Mammary epithelial cell (primary cell): ENCODE measurements at regions of chr16 and their contacts with region 1.

Region 1: GRCh38 chr16:24729362-24729984 is at the start of gene TNRC6A:
- DNase-seq: peak; percentile 83
- H3K4me3 ChIP-seq: peak within 1 kb of the TSS; percentile 85 to 96 (median 89)
- H3K27ac ChIP-seq: peak within 1 kb of the TSS; percentile 81
- H3K4me1 ChIP-seq: peaks cover 17% of the 10 kb centered on the region
- H3K27me3 ChIP-seq: no peaks in the 10 kb centered on the region
- CTCF ChIP-seq: no peak
- total RNA-seq, gene TNRC6A: 21.3 to 36.9 TPM

Region 2: DNA sequence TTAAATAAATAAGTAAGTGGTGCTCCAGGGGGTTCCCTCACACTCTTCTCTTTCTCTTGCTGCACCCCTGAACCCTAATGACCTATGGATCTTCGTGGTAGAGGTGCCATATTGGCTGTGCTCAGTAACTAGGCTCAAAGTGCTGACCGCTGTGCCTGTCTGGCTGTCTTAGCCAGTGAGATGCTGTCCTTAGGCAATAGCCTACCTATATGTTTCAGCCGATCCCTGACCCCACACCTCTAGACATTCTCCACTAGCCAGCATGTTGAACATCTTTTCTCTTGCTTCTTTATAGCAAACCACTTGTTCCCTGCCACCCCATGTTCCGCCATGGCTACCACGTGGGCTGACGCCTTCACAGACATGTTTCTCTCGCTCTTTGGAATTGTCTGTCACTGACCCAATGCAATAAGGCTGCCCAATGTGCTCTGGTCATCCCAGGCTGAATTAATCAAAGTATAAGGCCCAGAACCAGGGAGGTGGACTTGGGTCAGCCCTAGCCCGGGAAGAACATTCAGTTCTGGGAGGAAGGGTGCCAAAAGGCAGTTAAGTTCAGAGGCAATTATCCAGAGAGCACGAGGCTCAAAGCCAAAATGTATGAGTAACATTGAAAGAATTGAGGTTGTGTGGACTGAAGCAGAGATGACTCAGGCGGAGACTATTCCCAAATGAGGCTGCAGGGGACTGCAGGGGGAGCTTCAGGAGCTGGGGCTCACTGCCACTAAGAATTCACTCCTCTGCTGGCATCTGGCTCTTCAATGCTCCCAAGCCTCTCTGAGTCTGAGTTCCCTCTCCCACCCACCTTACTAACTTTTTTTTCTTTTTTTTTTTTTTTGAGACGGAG is 28.7 kb before region 1 on chr16:
- CTCF ChIA-PET with region 1: no interaction called
- dilution Hi-C with region 1: no loop called
- in situ Hi-C with region 1: no loop called
- intact Hi-C with region 1: loop called (anchors 1 kb)
- DNase-seq: peak; percentile 85
- H3K4me3 ChIP-seq: no peak overlapping the region
- H3K27ac ChIP-seq: peak overlapping the region; percentile 14
- H3K4me1 ChIP-seq: peaks cover 16% of the 10 kb centered on the region
- H3K27me3 ChIP-seq: no peaks in the 10 kb centered on the region
- CTCF ChIP-seq: peak; percentile 22 to 50

Region 3: GRCh38 chr16:24748242-24748641 is 18.8 kb after region 1 on chr16:
- CTCF ChIA-PET with region 1: no interaction called
- dilution Hi-C with region 1: no loop called
- in situ Hi-C with region 1: no loop called
- intact Hi-C with region 1: loop called (anchors 1 kb)
- DNase-seq: peak; percentile 88
- H3K4me3 ChIP-seq: no peak overlapping the region
- H3K27ac ChIP-seq: no peak overlapping the region
- H3K4me1 ChIP-seq: peaks cover 23% of the 10 kb centered on the region
- H3K27me3 ChIP-seq: no peaks in the 10 kb centered on the region
- CTCF ChIP-seq: no peak